Activated T-helper 1 cell treated with anti-CD3 and anti-CD28 coated beads, Interleukin-12 subunit alpha, Interleukin-12 subunit beta, Interleukin-2, Interleukin-4 antibody, amounts not matched to agents 30 ng/mL and 10 ng/mL and 1 ng/mL, durations not matched to agents 14 hours and 24 hours and 36 hours (primary cell): ENCODE measurements at regions of chr3 and their contacts with region 1.

Region 1: GRCh38 chr3:124576565-124577493 is 153.4 kb upstream of the UMPS start:
- DNase-seq: no peak
- H3K4me3 Mint-ChIP-seq: no peak overlapping the region
- H3K27ac Mint-ChIP-seq: no peak overlapping the region
- H3K4me1 Mint-ChIP-seq: peaks cover 6% of the 10 kb centered on the region
- H3K27me3 Mint-ChIP-seq: peaks cover 13% of the 10 kb centered on the region

Region 2: GRCh38 chr3:122952512-122952911 is 1624.3 kb before region 1 on chr3:
- intact Hi-C with region 1: loop called (anchors 10 kb)
- DNase-seq: no peak
- H3K4me3 Mint-ChIP-seq: no peak overlapping the region
- H3K27ac Mint-ChIP-seq: no peak overlapping the region
- H3K4me1 Mint-ChIP-seq: no peaks in the 10 kb centered on the region
- H3K27me3 Mint-ChIP-seq: peaks cover 16% of the 10 kb centered on the region

Region 3: GRCh38 chr3:124592621-124593441 is 16.0 kb after region 1 on chr3:
- intact Hi-C with region 1: no loop called
- DNase-seq: no peak
- H3K4me3 Mint-ChIP-seq: no peak overlapping the region
- H3K27ac Mint-ChIP-seq: no peak overlapping the region
- H3K4me1 Mint-ChIP-seq: peaks cover 16% of the 10 kb centered on the region
- H3K27me3 Mint-ChIP-seq: peaks cover 21% of the 10 kb centered on the region